Aorta (tissue), 5 donors: ENCODE measurements at regions of chr10 and their contacts with region 1.

Region 1: GRCh38 chr10:129963641-129964501 is at the start of gene EBF3:
- DNase-seq: peak; percentile 82 to 94
- ATAC-seq: peak; percentile 84
- H3K4me3 ChIP-seq: peak within 1 kb of the TSS; percentile 55 to 67
- H3K27ac ChIP-seq: no peak within 1 kb of the TSS
- H3K4me1 ChIP-seq: no peaks in the 10 kb centered on the region
- H3K27me3 ChIP-seq: no peaks in the 10 kb centered on the region
- total RNA-seq, gene EBF3: 8.4 to 23.3 TPM

Region 2: GRCh38 chr10:128050936-128051335 is 1912.9 kb before region 1 on chr10:
- intact Hi-C with region 1: loop called in 1 of 2 experiments (anchors 10 kb)
- DNase-seq: peak in 1 of 2 donors; percentile 41
- ATAC-seq: no peak
- H3K4me3 ChIP-seq: no peak overlapping the region
- H3K27ac ChIP-seq: no peak overlapping the region
- H3K4me1 ChIP-seq: no peaks in the 10 kb centered on the region
- H3K27me3 ChIP-seq: no peaks in the 10 kb centered on the region

Region 3: DNA sequence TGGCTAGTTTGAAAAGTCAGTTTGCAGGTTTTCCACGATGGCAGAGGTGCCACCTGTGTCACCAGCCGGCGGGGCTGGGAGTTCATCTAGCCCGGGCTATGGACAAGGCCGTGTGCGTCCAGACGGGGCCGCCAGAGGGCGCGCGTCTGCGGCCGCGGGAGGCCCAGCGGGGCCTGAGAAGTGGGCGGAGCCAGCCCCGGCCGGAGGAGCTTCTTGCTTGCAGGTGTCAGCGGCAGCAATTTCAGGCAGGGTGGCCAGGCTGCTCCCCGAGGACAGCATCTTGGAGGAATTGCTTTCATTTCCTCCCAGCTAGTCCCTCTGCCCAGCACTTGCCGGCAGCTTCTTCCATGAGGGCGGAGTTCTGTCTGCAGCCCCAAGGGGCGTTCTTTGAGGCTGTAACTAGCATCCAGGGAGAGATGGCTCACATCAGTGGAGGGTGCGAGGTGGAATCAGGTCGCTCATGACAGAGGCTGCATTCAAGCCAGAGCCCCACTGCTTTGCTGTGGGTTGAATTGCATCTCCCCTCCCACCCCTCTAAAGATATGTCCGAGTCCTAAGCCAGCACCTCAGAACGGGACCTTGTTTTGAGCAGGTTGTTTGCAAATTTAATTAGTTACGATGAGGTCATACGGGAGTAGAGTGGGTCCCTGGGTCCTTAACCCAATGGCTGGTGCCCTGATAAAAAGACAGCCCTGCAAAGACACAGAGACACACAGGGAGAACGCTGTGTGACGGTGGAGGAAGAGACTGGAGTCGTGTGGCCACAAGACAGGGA is 1751.7 kb before region 1 on chr10:
- intact Hi-C with region 1: loop called in 1 of 2 experiments (anchors 10 kb)
- DNase-seq: peak; percentile 87 to 92
- ATAC-seq: peak; percentile 89
- H3K4me3 ChIP-seq: no peak overlapping the region
- H3K27ac ChIP-seq: no peak overlapping the region
- H3K4me1 ChIP-seq: no peaks in the 10 kb centered on the region
- H3K27me3 ChIP-seq: no peaks in the 10 kb centered on the region

Region 4: GRCh38 chr10:129466703-129467358 is 497.0 kb before region 1 on chr10 and contains the start of gene MGMT:
- intact Hi-C with region 1: loop called in 1 of 2 experiments (anchors 10 kb)
- DNase-seq: peak; percentile 97 to 99
- ATAC-seq: peak; percentile 98
- H3K4me3 ChIP-seq: peak within 1 kb of the TSS; percentile 36 to 38
- H3K27ac ChIP-seq: peak within 1 kb of the TSS in 1 of 2 donors; percentile 70
- H3K4me1 ChIP-seq: no peaks in the 10 kb centered on the region
- H3K27me3 ChIP-seq: no peaks in the 10 kb centered on the region
- total RNA-seq, gene MGMT: 13.4 to 30.0 TPM

Region 5: DNA sequence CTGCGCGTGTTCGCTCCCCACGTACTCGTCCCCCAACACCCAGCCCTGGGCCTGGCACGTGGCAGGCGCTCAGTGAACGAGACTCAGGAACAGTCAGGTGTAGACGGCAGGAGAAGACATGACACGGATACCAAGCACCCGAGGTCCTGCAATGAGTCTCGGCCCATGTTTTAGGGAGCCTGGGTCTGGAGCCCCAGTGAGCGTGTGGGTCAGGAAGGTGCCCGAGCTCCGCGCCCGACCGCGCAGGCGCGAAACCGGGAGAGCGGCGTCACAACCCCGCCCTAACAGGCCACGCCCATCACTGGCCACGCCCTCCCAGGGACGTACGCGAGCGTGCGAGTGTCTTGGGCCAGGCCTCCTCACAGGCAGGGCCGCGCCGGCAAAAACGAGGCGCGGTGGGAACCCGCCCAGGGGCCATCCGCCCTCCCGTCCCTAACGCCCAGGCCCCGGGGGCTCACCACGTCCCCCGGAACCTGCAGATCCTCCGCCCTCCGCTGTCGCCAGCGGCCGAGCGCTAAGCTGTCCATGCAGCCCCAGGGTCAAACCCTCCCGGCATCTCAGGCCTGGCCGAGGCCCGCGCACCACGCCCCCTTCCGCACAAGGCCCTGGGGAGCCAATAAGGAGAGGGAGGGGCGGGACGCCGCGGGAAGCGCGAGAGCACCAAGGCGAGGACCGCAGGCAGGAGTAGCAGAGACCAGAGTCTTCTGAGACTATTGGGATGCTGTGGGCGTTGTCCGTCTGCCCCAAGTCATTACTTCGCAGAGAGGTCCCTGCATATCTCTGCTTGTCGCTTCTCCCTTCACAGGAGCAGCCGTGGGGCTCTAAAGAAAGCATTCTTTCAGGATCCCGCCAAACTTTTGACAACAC is 146.6 kb after region 1 on chr10 and contains the start of gene C10orf143:
- intact Hi-C with region 1: loop called in 1 of 2 experiments (anchors 5 kb)
- DNase-seq: peak; percentile 99
- ATAC-seq: peak; percentile 99
- H3K4me3 ChIP-seq: peak within 1 kb of the TSS; percentile 55 to 60
- H3K27ac ChIP-seq: peak within 1 kb of the TSS in 1 of 2 donors; percentile 90
- H3K4me1 ChIP-seq: peaks cover 0 to 4% of the 10 kb centered on the region in 2 donors
- H3K27me3 ChIP-seq: no peaks in the 10 kb centered on the region
- total RNA-seq, gene C10orf143: 1.9 to 3.2 TPM